ENCODE measurements at regions of chr17 and their contacts with region 1.

Region 1: GRCh38 chr17:7484067-7484918 is at the start of gene POLR2A:
- DNase-seq: peak; percentile 99
- ATAC-seq: peak; percentile 63
- H3K4me3 ChIP-seq: peak within 1 kb of the TSS; percentile 80 to 100 (median 97)
- H3K4me3 Mint-ChIP-seq: peak within 1 kb of the TSS; percentile 99
- H3K27ac ChIP-seq: peak within 1 kb of the TSS; percentile 100
- H3K27ac Mint-ChIP-seq: peak within 1 kb of the TSS; percentile 100
- H3K4me1 ChIP-seq: peaks cover 29 to 53% of the 10 kb centered on the region in 2 donors
- H3K4me1 Mint-ChIP-seq: peaks cover 71% of the 10 kb centered on the region
- H3K27me3 ChIP-seq: no peaks in the 10 kb centered on the region
- H3K27me3 Mint-ChIP-seq: no peaks in the 10 kb centered on the region
- CTCF ChIP-seq: no peak
- total RNA-seq, gene POLR2A: 225 and 240 TPM in 2 replicates

Region 2: GRCh38 chr17:7204828-7205461 is 279.3 kb before region 1 on chr17:
- CTCF ChIA-PET with region 1: no interaction called
- POLR2A ChIA-PET with region 1: no interaction called
- intact Hi-C with region 1: loop called (anchors 2 kb)
- DNase-seq: peak; percentile 99
- ATAC-seq: peak; percentile 85
- H3K4me3 ChIP-seq: peak overlapping the region in 4 of 5 experiments; percentile 49 to 65 (median 55)
- H3K4me3 Mint-ChIP-seq: peak overlapping the region; percentile 82
- H3K27ac ChIP-seq: peak overlapping the region; percentile 86 to 93
- H3K27ac Mint-ChIP-seq: peak overlapping the region; percentile 91
- H3K4me1 ChIP-seq: peaks cover 17 to 25% of the 10 kb centered on the region in 2 donors
- H3K4me1 Mint-ChIP-seq: peaks cover 28% of the 10 kb centered on the region
- H3K27me3 ChIP-seq: no peaks in the 10 kb centered on the region
- H3K27me3 Mint-ChIP-seq: peaks cover under 1% of the 10 kb centered on the region
- CTCF ChIP-seq: no peak

Region 3: GRCh38 chr17:7252176-7253043 is 231.9 kb before region 1 on chr17 and contains the start of gene ELP5:
- CTCF ChIA-PET with region 1: no interaction called
- POLR2A ChIA-PET with region 1: no interaction called
- intact Hi-C with region 1: loop called (anchors 1 kb)
- DNase-seq: peak; percentile 100
- ATAC-seq: peak; percentile 64
- H3K4me3 ChIP-seq: peak within 1 kb of the TSS; percentile 69 to 90 (median 78)
- H3K4me3 Mint-ChIP-seq: peak within 1 kb of the TSS; percentile 98
- H3K27ac ChIP-seq: peak within 1 kb of the TSS; percentile 98 to 100
- H3K27ac Mint-ChIP-seq: peak within 1 kb of the TSS; percentile 100
- H3K4me1 ChIP-seq: peaks cover 30 to 33% of the 10 kb centered on the region in 2 donors
- H3K4me1 Mint-ChIP-seq: peaks cover 44% of the 10 kb centered on the region
- H3K27me3 ChIP-seq: no peaks in the 10 kb centered on the region
- H3K27me3 Mint-ChIP-seq: no peaks in the 10 kb centered on the region
- CTCF ChIP-seq: no peak
- total RNA-seq, gene ELP5: 42.2 and 48.0 TPM in 2 replicates

Region 4: GRCh38 chr17:7394452-7395191 is 89.7 kb before region 1 on chr17 and contains the start of gene PLSCR3:
- CTCF ChIA-PET with region 1: no interaction called
- POLR2A ChIA-PET with region 1: interaction called, 5 read pairs
- intact Hi-C with region 1: loop called (anchors 1 kb)
- DNase-seq: peak; percentile 90
- ATAC-seq: peak; percentile 89
- H3K4me3 ChIP-seq: peak within 1 kb of the TSS; percentile 31 to 84 (median 81)
- H3K4me3 Mint-ChIP-seq: peak within 1 kb of the TSS; percentile 96
- H3K27ac ChIP-seq: peak within 1 kb of the TSS; percentile 55 to 83
- H3K27ac Mint-ChIP-seq: peak within 1 kb of the TSS; percentile 95
- H3K4me1 ChIP-seq: peaks cover 12 to 16% of the 10 kb centered on the region in 2 donors
- H3K4me1 Mint-ChIP-seq: peaks cover 12% of the 10 kb centered on the region
- H3K27me3 ChIP-seq: no peaks in the 10 kb centered on the region
- H3K27me3 Mint-ChIP-seq: no peaks in the 10 kb centered on the region
- CTCF ChIP-seq: peak; percentile 20
- total RNA-seq, gene PLSCR3: 31.1 and 31.6 TPM in 2 replicates

Region 5: GRCh38 chr17:7403977-7404736 is 80.1 kb before region 1 on chr17 and contains the start of gene TMEM256:
- CTCF ChIA-PET with region 1: no interaction called
- POLR2A ChIA-PET with region 1: interaction called, 8 read pairs
- intact Hi-C with region 1: loop called (anchors 1 kb)
- DNase-seq: peak; percentile 98
- ATAC-seq: peak; percentile 87
- H3K4me3 ChIP-seq: peak within 1 kb of the TSS; percentile 57 to 95 (median 82)
- H3K4me3 Mint-ChIP-seq: peak within 1 kb of the TSS; percentile 98
- H3K27ac ChIP-seq: peak within 1 kb of the TSS; percentile 45 to 59
- H3K27ac Mint-ChIP-seq: peak within 1 kb of the TSS; percentile 94
- H3K4me1 ChIP-seq: peaks cover 17 to 20% of the 10 kb centered on the region in 2 donors
- H3K4me1 Mint-ChIP-seq: peaks cover 22% of the 10 kb centered on the region
- H3K27me3 ChIP-seq: peaks cover 0 to 27% (median 4%) of the 10 kb centered on the region in 4 experiments
- H3K27me3 Mint-ChIP-seq: peaks cover 17% of the 10 kb centered on the region
- CTCF ChIP-seq: no peak
- total RNA-seq, gene TMEM256: 64.5 and 67.8 TPM in 2 replicates

Region 6: GRCh38 chr17:7454980-7455379 is 29.3 kb before region 1 on chr17:
- CTCF ChIA-PET with region 1: interaction called, 3 read pairs
- POLR2A ChIA-PET with region 1: interaction called, 9 read pairs
- intact Hi-C with region 1: loop called (anchors 1 kb)
- DNase-seq: no peak
- ATAC-seq: no peak
- H3K4me3 ChIP-seq: peak overlapping the region; percentile 55 to 99 (median 90)
- H3K4me3 Mint-ChIP-seq: peak overlapping the region; percentile 91
- H3K27ac ChIP-seq: no peak overlapping the region
- H3K27ac Mint-ChIP-seq: peak overlapping the region; percentile 81
- H3K4me1 ChIP-seq: peaks cover 5 to 10% of the 10 kb centered on the region in 2 donors
- H3K4me1 Mint-ChIP-seq: peaks cover 11% of the 10 kb centered on the region
- H3K27me3 ChIP-seq: no peaks in the 10 kb centered on the region
- H3K27me3 Mint-ChIP-seq: peaks cover 4% of the 10 kb centered on the region
- CTCF ChIP-seq: no peak

Region 7: GRCh38 chr17:7496470-7497183 is 12.3 kb after region 1 on chr17:
- CTCF ChIA-PET with region 1: no interaction called
- POLR2A ChIA-PET with region 1: no interaction called
- intact Hi-C with region 1: no loop called
- DNase-seq: peak; percentile 22
- ATAC-seq: no peak
- H3K4me3 ChIP-seq: no peak overlapping the region
- H3K4me3 Mint-ChIP-seq: no peak overlapping the region
- H3K27ac ChIP-seq: no peak overlapping the region
- H3K27ac Mint-ChIP-seq: peak overlapping the region; percentile 15
- H3K4me1 ChIP-seq: no peaks in the 10 kb centered on the region
- H3K4me1 Mint-ChIP-seq: peaks cover 22% of the 10 kb centered on the region
- H3K27me3 ChIP-seq: no peaks in the 10 kb centered on the region
- H3K27me3 Mint-ChIP-seq: no peaks in the 10 kb centered on the region
- CTCF ChIP-seq: no peak

Region 8: DNA sequence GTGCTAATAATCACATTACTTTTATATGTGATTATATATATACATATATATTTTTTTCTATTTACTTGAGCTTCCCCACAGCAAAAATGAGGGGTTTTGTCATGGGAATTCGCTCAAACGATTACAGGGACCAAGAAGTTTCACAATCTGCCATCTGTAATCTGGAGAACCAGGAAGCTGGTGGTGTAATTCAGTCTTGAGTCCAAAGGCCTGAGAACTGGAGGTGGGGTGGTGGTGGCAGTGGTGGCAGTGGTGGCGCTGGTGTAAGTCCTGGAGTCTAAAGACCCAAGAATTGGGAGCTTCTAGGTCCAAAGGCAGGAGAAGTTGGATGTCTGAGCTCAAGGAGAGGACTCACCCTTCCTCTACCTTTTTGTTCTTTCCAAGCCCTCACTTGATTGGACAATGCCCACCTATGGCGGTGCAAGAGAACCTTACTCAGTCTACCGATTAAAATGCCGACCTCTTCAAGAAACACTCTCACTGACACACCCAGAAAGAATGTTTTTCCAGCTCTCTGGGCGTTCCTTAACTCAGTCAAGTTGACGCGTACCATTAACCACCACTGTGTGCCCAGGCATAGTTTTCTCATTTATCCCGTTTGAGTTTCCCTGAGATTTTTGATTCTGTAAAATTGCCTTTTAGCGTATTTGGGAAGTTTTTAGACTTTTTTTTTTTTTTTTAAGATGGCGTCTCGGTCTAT is 31.8 kb after region 1 on chr17:
- CTCF ChIA-PET with region 1: interaction called, 11 read pairs
- POLR2A ChIA-PET with region 1: no interaction called
- intact Hi-C with region 1: no loop called
- DNase-seq: no peak
- ATAC-seq: no peak
- H3K4me3 ChIP-seq: no peak overlapping the region
- H3K4me3 Mint-ChIP-seq: no peak overlapping the region
- H3K27ac ChIP-seq: no peak overlapping the region
- H3K27ac Mint-ChIP-seq: no peak overlapping the region
- H3K4me1 ChIP-seq: no peaks in the 10 kb centered on the region
- H3K4me1 Mint-ChIP-seq: no peaks in the 10 kb centered on the region
- H3K27me3 ChIP-seq: no peaks in the 10 kb centered on the region
- H3K27me3 Mint-ChIP-seq: no peaks in the 10 kb centered on the region
- CTCF ChIP-seq: no peak